ENCODE measurements at regions of chr14 and their contacts with region 1.

Region 1: DNA sequence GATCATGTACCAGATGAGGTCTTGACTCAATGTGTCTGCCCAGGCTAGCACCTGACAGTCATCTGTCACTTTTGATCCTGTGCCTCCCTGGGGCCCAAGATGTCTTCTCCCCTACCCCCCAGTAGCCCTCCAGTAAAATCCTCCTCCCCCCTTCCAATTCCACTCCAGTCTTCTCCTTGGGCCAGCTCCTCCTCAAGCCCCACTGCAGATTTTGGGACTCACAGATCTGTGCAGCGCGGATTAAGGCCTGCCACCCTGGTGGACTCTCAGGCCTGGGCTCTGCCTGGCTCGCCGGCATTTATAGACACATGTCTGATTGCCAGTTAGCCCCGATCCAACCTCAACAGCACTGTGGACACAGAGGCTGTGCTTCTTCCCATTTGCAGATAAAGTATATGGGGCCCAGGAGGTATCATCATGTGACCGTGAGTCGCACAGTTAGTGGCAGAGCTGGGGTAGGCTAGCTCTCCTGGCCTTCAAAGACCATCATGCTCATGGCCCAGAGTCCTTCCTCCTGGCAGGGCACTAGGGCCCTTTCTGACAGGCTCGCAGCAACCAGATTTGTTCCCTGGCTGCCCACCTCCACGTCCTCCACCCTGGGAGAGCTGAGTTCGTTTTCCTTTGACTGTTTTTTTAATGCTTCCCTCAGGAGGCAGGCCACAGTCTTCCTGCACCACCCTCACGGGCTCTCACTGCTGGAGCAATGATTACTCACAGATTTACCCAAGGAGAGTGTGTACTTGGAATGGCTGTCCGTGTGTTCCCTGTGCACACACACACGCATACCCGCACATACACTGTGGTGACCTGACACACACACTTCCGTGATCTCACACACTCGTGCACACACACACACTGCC is 98.3 kb upstream of the DIO3 start:
- DNase-seq: no peak
- H3K4me3 ChIP-seq: no peak overlapping the region
- H3K27ac ChIP-seq: no peak overlapping the region
- H3K4me1 ChIP-seq: peaks cover 0 to 7% of the 10 kb centered on the region in 2 donors
- H3K27me3 ChIP-seq: peaks cover 13 to 36% of the 10 kb centered on the region in 2 donors
- CTCF ChIP-seq: no peak
- POLR2A ChIP-seq: no peak

Region 2: GRCh38 chr14:100524933-100525243 is 938.1 kb before region 1 on chr14:
- intact Hi-C with region 1: loop called (anchors 5 kb)
- DNase-seq: no peak
- H3K4me3 ChIP-seq: no peak overlapping the region
- H3K27ac ChIP-seq: no peak overlapping the region
- H3K4me1 ChIP-seq: no peaks in the 10 kb centered on the region
- H3K27me3 ChIP-seq: no peaks in the 10 kb centered on the region
- CTCF ChIP-seq: no peak
- POLR2A ChIP-seq: no peak